ENCODE measurements at regions of chr5 and their contacts with region 1.

Region 1: DNA sequence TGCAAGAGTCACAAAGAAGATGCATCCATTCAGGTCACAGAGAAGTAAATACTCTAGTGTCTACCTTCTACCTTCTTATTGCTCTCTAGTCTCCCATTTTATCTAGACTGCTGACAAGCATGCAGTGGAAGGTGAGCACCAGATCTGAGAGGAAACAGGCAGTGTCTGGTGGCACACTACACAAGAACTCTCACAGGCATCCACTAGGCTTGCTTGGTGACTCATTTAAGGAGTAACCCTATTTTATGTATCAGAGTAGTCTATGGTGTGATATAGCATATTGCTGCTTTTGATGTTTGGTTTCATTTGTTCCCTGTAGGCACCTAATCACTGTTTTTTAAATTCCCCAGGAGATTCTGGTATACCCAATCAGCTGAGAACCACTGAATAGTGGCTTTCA is 1.6 kb upstream of the THBS4 start:
- DNase-seq: peak; percentile 42
- ATAC-seq: peak; percentile 91
- H3K4me3 Mint-ChIP-seq: no peak overlapping the region
- H3K27ac Mint-ChIP-seq: no peak overlapping the region
- H3K4me1 Mint-ChIP-seq: peaks cover 32% of the 10 kb centered on the region
- H3K27me3 Mint-ChIP-seq: peaks cover 35% of the 10 kb centered on the region

Region 2: GRCh38 chr5:79962575-79963222 is 70.8 kb before region 1 on chr5:
- CTCF ChIA-PET with region 1: interaction called, 4 read pairs
- POLR2A ChIA-PET with region 1: no interaction called
- intact Hi-C with region 1: loop called (anchors 1 to 2 kb)
- DNase-seq: peak; percentile 83
- ATAC-seq: peak; percentile 89
- H3K4me3 Mint-ChIP-seq: peak overlapping the region; percentile 15
- H3K27ac Mint-ChIP-seq: peak overlapping the region; percentile 93
- H3K4me1 Mint-ChIP-seq: peaks cover 32% of the 10 kb centered on the region
- H3K27me3 Mint-ChIP-seq: peaks cover 14% of the 10 kb centered on the region

Region 3: DNA sequence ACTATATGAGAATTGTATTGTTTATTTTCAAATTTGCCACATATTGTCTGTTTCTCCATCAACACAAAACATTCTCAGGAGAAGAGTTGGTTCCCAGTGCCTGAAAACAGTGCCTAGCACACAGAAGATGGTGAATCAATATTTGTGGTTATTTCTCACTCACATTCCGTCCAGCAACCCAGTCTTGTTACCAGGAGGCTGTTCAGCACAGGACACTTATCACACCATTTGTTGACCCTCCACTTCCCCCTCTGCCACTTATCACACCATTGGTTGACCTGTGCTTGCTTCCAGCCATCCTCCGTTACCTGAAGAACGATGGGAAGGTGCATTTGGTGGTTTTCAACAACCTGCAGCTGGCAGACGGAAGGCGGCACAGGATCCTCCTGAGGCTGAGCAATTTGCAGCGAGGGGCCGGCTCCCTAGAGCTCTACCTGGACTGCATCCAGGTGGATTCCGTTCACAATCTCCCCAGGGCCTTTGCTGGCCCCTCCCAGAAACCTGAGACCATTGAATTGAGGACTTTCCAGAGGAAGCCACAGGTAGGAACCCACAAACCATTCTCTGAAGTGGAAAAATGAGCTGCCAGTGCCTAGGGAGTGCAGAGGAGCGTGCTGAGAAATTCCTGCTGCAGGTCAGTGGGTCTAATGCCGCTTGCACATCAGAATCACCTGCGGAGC is 22.1 kb after region 1 on chr5:
- CTCF ChIA-PET with region 1: interaction called, 3 read pairs
- POLR2A ChIA-PET with region 1: no interaction called
- intact Hi-C with region 1: loop called in 1 of 2 experiments (anchors 2 kb)
- DNase-seq: no peak
- ATAC-seq: no peak
- H3K4me3 Mint-ChIP-seq: no peak overlapping the region
- H3K27ac Mint-ChIP-seq: no peak overlapping the region
- H3K4me1 Mint-ChIP-seq: peaks cover 4% of the 10 kb centered on the region
- H3K27me3 Mint-ChIP-seq: no peaks in the 10 kb centered on the region

Region 4: GRCh38 chr5:80069918-80070318 is 36.4 kb after region 1 on chr5:
- CTCF ChIA-PET with region 1: no interaction called
- POLR2A ChIA-PET with region 1: no interaction called
- intact Hi-C with region 1: no loop called
- DNase-seq: no peak
- ATAC-seq: no peak
- H3K4me3 Mint-ChIP-seq: no peak overlapping the region
- H3K27ac Mint-ChIP-seq: no peak overlapping the region
- H3K4me1 Mint-ChIP-seq: no peaks in the 10 kb centered on the region
- H3K27me3 Mint-ChIP-seq: no peaks in the 10 kb centered on the region